CD8-positive, alpha-beta T cell (primary cell): ENCODE measurements at regions of chr11 and their contacts with region 1.

Region 1: GRCh38 chr11:12377824-12378593 is 638 bp downstream of the PARVA start:
- DNase-seq: peak in 2 of 9 experiments; percentile 31 to 38
- ATAC-seq: peak; percentile 57
- H3K4me3 ChIP-seq: peak overlapping the region; percentile 33 to 42
- H3K4me3 Mint-ChIP-seq: peak overlapping the region; percentile 83
- H3K27ac ChIP-seq: no peak overlapping the region
- H3K27ac Mint-ChIP-seq: peak overlapping the region; percentile 20
- H3K4me1 ChIP-seq: peaks cover 11% of the 10 kb centered on the region
- H3K4me1 Mint-ChIP-seq: peaks cover 13% of the 10 kb centered on the region
- H3K27me3 ChIP-seq: peaks cover 0 to 2% of the 10 kb centered on the region in 2 experiments
- H3K27me3 Mint-ChIP-seq: peaks cover 23% of the 10 kb centered on the region
- CTCF ChIP-seq: no peak

Region 2: DNA sequence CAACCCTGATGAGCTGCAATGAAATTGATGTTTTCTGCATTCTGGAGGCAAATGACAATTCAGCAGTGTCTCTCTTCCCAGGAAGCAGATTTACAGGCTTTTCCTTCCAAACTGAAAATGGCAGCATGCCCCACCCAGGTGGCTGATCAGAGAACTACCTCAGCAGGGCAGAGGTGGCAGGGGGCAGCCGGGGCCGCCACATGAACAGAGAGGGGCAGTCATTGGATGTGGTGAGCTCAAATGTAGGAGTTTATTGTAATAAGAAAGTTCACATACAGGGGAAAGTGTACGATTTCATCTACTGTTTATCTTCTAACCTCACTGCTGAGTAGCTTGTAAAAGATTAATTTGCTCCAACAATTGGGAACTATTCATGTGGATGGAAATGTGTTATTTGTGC is 16.3 kb before region 1 on chr11:
- CTCF ChIA-PET with region 1: interaction called, 20 read pairs
- POLR2A ChIA-PET with region 1: interaction called, 19 read pairs
- intact Hi-C with region 1: no loop called
- DNase-seq: no peak
- ATAC-seq: no peak
- H3K4me3 ChIP-seq: no peak overlapping the region
- H3K4me3 Mint-ChIP-seq: no peak overlapping the region
- H3K27ac ChIP-seq: no peak overlapping the region
- H3K27ac Mint-ChIP-seq: peak overlapping the region; percentile 68
- H3K4me1 ChIP-seq: peaks cover 48% of the 10 kb centered on the region
- H3K4me1 Mint-ChIP-seq: peaks cover 73% of the 10 kb centered on the region
- H3K27me3 ChIP-seq: no peaks in the 10 kb centered on the region
- H3K27me3 Mint-ChIP-seq: no peaks in the 10 kb centered on the region
- CTCF ChIP-seq: no peak